ENCODE measurements at regions of chr13 and their contacts with region 1.

Region 1: GRCh38 chr13:52738719-52739467 is 727 bp downstream of the CNMD start:
- DNase-seq: peak; percentile 68
- ATAC-seq: peak; percentile 62
- H3K4me3 Mint-ChIP-seq: peak overlapping the region; percentile 93
- H3K27ac Mint-ChIP-seq: peak overlapping the region; percentile 71
- H3K4me1 Mint-ChIP-seq: peaks cover 48% of the 10 kb centered on the region
- H3K27me3 Mint-ChIP-seq: peaks cover 7% of the 10 kb centered on the region; the same call in 1 of the 2 replicates
- CTCF ChIP-seq: peak; percentile 60

Region 2: DNA sequence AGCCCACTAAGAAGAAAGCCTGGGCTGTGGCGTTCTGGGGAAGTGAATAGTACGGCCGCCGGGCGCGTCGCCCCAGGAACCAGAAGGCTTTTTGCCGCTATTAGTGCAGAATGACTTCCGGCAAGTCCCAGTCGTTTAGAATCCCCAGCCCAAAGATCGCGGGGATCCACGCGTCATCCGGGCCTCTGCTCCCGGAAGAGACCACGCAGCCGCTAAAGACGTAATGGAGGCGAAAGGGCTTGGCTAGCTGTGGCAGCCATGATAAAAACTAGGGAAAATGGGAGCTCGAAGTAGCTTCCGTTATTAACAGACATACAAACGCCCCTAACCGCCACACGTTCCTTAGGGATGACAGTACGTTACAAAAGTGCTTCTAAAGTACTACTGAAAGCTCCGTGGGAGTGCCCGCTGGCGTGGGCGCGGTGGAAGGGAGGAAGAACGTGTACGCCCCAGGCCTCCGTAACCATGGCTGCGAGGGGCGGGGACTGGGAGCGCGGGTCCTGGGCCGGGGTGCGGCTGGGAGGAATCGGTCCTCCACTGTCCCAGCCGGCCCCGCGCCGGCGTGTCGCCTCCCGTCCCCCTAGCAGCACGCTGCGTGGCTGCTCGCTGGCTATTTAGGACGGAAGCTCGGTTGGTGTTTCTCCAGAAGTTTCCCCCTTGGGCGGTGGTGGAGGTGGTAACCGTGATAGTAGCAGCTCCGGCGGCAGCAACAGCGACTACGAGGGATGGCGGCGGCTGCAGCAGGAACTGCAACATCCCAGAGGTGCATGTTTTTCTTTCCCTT is 86.5 kb before region 1 on chr13 and contains the start of gene SUGT1:
- CTCF ChIA-PET with region 1: interaction called, 10 read pairs
- POLR2A ChIA-PET with region 1: interaction called, 6 read pairs
- DNase-seq: peak; percentile 96
- ATAC-seq: peak; percentile 96
- H3K4me3 Mint-ChIP-seq: no peak within 1 kb of the TSS
- H3K27ac Mint-ChIP-seq: no peak within 1 kb of the TSS
- H3K4me1 Mint-ChIP-seq: peaks cover 7% of the 10 kb centered on the region
- H3K27me3 Mint-ChIP-seq: no peaks in the 10 kb centered on the region
- CTCF ChIP-seq: no peak; the same call in 1 of the 2 replicates
- total RNA-seq, gene SUGT1: 74.8 to 77.6 TPM (median 76.3 TPM) in 3 replicates

Region 3: DNA sequence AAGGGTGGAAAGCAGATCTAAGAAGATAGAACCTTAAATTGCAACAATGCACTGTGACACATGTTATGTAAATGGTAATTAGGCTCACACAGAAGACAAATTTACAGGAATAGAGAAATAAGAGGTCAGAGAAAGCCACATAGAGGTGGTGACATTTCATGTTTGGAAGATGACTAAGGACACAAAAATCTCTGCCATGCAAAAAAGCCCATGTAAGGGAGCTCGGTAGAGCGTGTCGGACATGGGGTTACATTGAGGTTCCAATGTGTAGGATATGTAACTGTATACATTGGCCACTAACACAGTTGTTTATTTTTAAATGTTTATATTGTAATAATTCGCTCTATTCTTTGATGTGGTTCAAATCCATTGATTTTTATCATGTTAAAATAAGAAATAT is 52.5 kb before region 1 on chr13:
- CTCF ChIA-PET with region 1: interaction called, 21 read pairs
- POLR2A ChIA-PET with region 1: interaction called, 3 read pairs
- DNase-seq: no peak
- ATAC-seq: no peak
- H3K4me3 Mint-ChIP-seq: no peak overlapping the region
- H3K27ac Mint-ChIP-seq: peak overlapping the region; percentile 10; the same call in 1 of the 2 replicates
- H3K4me1 Mint-ChIP-seq: no peaks in the 10 kb centered on the region
- H3K27me3 Mint-ChIP-seq: no peaks in the 10 kb centered on the region
- CTCF ChIP-seq: no peak

Region 4: GRCh38 chr13:52713894-52714293 is 25.0 kb before region 1 on chr13:
- CTCF ChIA-PET with region 1: interaction called, 15 read pairs
- POLR2A ChIA-PET with region 1: no interaction called
- DNase-seq: no peak
- ATAC-seq: no peak
- H3K4me3 Mint-ChIP-seq: no peak overlapping the region
- H3K27ac Mint-ChIP-seq: no peak overlapping the region
- H3K4me1 Mint-ChIP-seq: peaks cover 31% of the 10 kb centered on the region
- H3K27me3 Mint-ChIP-seq: no peaks in the 10 kb centered on the region; the same call in 1 of the 2 replicates
- CTCF ChIP-seq: no peak

Region 5: GRCh38 chr13:52725302-52725701 is 13.6 kb before region 1 on chr13:
- CTCF ChIA-PET with region 1: interaction called, 23 read pairs
- POLR2A ChIA-PET with region 1: interaction called, 3 read pairs
- DNase-seq: no peak
- ATAC-seq: no peak
- H3K4me3 Mint-ChIP-seq: no peak overlapping the region
- H3K27ac Mint-ChIP-seq: no peak overlapping the region
- H3K4me1 Mint-ChIP-seq: peaks cover 35% of the 10 kb centered on the region
- H3K27me3 Mint-ChIP-seq: no peaks in the 10 kb centered on the region; the same call in 1 of the 2 replicates
- CTCF ChIP-seq: no peak

Region 6: DNA sequence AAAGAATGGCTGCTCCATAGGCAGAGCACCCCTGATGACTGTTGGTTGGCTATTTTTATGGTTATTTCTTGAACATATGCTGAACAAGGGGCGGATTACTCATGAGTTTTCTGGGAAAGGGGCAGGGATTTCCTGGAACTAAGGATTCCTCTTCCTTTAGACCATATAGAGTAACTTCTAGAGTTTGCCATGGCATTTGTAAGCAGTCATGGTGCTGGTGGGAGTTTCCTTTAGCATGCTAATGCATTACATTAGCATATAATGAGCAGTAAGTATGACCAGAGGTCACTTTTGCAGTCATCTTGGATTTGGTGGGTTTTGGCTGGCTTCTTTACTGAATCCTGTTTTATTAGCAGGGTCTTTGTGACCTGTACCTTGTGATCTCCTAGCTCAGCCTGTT is 148.3 kb after region 1 on chr13:
- CTCF ChIA-PET with region 1: no interaction called
- POLR2A ChIA-PET with region 1: no interaction called
- DNase-seq: no peak
- ATAC-seq: no peak; the same call in 1 of the 2 replicates
- H3K4me3 Mint-ChIP-seq: no peak overlapping the region
- H3K27ac Mint-ChIP-seq: no peak overlapping the region
- H3K4me1 Mint-ChIP-seq: peaks cover 55% of the 10 kb centered on the region
- H3K27me3 Mint-ChIP-seq: peaks cover 75% of the 10 kb centered on the region
- CTCF ChIP-seq: no peak

Region 7: GRCh38 chr13:53200498-53201453 is 461.9 kb after region 1 on chr13:
- CTCF ChIA-PET with region 1: interaction called, 20 read pairs
- POLR2A ChIA-PET with region 1: no interaction called
- DNase-seq: peak; percentile 90
- ATAC-seq: peak; percentile 78
- H3K4me3 Mint-ChIP-seq: peak overlapping the region; percentile 55
- H3K27ac Mint-ChIP-seq: no peak overlapping the region
- H3K4me1 Mint-ChIP-seq: no peaks in the 10 kb centered on the region
- H3K27me3 Mint-ChIP-seq: peaks cover 62% of the 10 kb centered on the region
- CTCF ChIP-seq: peak; percentile 92

Measured in WTC11 (cell line).